ENCODE measurements at regions of chr3 and their contacts with region 1.

Region 1: DNA sequence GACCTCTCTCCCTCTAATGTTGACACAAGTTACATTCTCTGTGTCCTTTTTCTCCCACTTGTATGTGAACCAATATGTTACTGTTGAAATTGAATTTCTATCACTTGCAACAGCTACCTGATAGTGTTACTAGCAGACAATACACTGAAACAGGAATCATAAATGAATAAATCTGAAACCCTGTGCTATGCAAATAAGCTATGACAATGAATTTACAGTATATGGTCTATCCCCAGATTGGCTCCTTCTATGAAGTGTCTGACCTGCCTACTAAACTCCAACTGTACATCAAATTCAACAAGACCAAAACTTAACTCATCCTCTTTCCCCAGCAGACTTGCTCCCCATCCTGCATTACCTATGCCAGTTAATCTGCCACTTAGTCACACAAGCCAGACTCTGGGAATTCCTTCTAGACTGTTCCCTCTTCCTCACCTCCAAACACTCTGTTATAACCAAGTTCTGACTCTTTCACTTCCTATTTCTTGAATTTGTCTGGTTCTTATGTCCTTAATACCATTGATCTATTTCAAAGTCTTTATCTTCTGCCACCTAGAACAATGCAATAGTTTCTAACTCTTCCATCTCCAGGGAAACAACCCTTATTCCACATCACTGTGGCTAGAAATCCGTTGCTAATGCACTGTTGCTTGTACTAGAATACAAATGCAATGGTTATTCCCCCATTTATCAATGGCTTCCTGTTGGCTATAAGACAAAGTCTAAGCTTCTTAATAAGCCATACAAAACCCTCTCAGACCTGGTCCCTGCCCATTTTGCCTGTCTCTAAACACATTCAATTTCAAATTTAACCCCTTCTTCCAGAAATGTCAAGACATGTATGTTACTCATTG is 13.4 kb upstream of the ZNF639 start:
- DNase-seq: no peak
- ATAC-seq: no peak
- H3K4me3 ChIP-seq: no peak overlapping the region
- H3K27ac ChIP-seq: no peak overlapping the region
- H3K4me1 ChIP-seq: no peaks in the 10 kb centered on the region
- H3K27me3 ChIP-seq: no peaks in the 10 kb centered on the region

Region 2: GRCh38 chr3:179015551-179016020 is 293.9 kb before region 1 on chr3:
- intact Hi-C with region 1: loop called in 1 of 4 experiments (anchors 10 kb)
- DNase-seq: no peak
- ATAC-seq: peak; percentile 74 to 81
- H3K4me3 ChIP-seq: no peak overlapping the region
- H3K27ac ChIP-seq: no peak overlapping the region
- H3K4me1 ChIP-seq: peaks cover under 1% of the 10 kb centered on the region
- H3K27me3 ChIP-seq: no peaks in the 10 kb centered on the region

Region 3: DNA sequence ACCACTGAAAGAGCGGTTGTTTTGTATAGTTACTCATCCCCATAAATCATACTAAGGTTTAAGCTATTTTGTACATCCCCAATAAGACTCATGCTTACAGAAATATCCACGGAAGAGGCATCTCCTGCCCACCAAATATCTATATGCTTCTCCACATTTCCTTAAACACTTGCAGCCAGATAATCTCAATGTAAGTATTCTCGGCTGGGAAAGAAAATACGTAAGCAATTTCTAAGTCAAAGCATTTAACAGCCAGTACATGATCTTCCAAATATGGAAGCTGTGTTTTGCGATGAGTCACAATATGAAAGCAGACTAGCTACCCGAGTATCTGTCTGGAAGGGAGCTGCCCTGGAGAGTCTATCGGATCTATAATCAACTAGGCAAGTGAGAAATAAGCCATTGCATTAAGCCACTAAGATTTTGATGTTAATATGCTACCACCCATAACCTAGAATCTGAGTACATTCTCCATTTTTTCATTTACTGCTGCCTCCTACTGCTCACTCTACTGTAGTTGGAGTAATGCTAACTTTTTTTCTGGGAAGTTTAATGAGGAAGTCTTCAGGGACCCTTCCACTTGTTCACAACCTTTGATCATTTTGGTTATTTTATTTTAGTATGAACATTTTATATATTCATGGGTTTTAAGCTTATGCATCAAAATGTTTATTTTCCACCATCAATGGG is 210.9 kb before region 1 on chr3:
- intact Hi-C with region 1: loop called in 2 of 4 experiments (anchors 10 kb)
- DNase-seq: no peak
- ATAC-seq: no peak
- H3K4me3 ChIP-seq: no peak overlapping the region
- H3K27ac ChIP-seq: no peak overlapping the region
- H3K4me1 ChIP-seq: peaks cover 2% of the 10 kb centered on the region
- H3K27me3 ChIP-seq: no peaks in the 10 kb centered on the region

Region 4: DNA sequence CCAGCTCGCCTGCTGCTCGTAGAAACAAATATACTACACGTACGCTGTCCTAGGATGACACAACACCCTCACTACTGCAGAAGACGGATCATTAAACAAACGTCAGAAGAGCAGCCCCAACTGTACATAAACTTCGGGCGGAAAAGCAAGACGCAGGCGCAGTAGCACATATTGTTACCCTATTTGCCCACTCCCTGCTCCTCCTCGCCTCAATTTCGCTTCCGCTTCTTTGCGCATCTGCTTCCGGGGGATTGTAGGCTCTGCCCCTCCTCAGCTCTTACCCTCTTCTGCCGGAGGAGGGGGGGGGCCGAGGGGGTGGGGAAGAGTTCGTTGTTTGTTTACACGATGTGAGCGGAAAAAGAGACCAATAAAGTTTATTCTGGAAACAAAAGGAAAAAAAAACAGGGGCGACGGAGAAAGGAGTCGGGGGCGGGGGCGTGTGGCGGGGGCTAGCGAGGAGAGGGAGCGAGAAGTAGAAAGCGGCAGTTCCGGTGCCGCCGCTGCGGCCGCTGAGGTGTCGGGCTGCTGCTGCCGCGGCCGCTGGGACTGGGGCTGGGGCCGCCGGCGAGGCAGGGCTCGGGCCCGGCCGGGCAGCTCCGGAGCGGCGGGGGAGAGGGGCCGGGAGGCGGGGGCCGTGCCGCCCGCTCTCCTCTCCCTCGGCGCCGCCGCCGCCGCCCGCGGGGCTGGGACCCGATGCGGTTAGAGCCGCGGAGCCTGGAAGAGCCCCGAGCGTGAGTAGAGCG is 161.4 kb before region 1 on chr3 and contains the start of gene PIK3CA:
- intact Hi-C with region 1: loop called in 1 of 4 experiments (anchors 10 kb)
- DNase-seq: peak; percentile 96
- ATAC-seq: peak; percentile 98
- H3K4me3 ChIP-seq: peak within 1 kb of the TSS; percentile 95
- H3K27ac ChIP-seq: peak within 1 kb of the TSS; percentile 91
- H3K4me1 ChIP-seq: no peaks in the 10 kb centered on the region
- H3K27me3 ChIP-seq: no peaks in the 10 kb centered on the region
- total RNA-seq, gene PIK3CA: 20.7 to 22.3 (median 21.7) TPM

Measured in right cardiac atrium (tissue), 5 donors.